Adrenal gland (tissue), 19 donors: ENCODE measurements at regions of chr10 and their contacts with region 1.

Region 1: DNA sequence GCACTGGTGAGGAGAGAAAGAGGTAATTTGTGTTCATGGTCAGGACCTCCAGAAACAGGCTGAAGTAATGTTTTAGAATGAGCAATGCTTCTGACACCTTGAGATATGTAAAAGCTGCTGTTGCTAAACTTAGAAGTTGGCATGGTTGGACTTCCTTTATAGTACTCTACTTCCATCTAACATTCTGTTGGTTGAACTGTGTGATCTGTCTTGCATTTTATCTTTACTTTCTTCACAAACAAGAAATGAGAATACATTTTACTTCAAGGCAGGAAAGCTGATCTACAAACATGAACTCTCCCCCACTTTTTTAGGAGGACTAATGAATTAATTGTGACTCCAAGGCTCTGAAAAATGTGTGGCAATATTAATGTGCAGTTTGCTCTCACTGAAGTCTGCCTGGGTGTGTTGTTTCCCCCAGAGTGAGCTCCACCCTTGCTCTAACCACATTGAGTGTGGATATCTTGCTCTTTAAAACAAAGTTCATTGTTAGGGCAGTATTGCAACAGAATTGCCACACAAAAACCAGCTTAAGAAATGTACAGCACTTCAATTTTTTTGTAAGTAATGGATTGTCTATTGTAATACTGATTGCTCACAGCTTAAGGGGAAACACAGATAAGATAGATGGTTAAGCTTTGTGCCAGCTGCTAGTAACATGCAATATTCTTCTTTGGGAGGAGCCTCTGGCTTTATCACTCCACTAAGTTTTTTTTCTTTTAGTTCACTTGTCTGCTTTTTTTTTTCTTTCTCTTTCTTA is 69.0 kb downstream of the ADD3 start:
- DNase-seq: peak in 6 of 7 donors; percentile 24 to 77 (median 56)
- H3K4me3 ChIP-seq: peak overlapping the region in 1 of 4 donors; percentile 21
- H3K27ac ChIP-seq: peak overlapping the region in 4 of 5 donors; percentile 18 to 76 (median 51)
- H3K4me1 ChIP-seq: peaks cover 18 to 50% of the 10 kb centered on the region in 2 donors
- H3K27me3 ChIP-seq: no peaks in the 10 kb centered on the region
- CTCF ChIP-seq: no peak
- POLR2A ChIP-seq: no peak

Region 2: DNA sequence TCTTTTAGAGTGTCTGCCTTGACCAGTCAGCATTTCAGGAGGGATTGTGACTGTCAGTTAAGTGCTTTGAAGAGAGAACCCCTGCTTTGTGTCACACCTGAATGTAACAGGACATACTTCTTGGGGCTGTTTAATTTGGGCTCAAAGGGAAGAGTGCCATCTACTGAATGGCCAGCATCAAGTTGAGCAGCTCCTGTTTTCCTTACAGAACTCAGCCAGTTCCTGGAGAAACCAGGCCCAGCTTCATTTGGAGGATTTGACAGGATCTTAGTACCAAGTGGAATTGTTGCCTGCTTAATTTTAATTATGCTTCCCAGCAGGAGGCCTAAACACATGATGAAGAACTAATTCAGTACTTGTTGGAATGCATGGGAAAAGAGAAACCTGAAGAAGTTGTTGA is 60.7 kb before region 1 on chr10:
- intact Hi-C with region 1: loop called in 1 of 2 experiments (anchors 10 kb)
- DNase-seq: peak in 1 of 7 donors; percentile 10
- H3K4me3 ChIP-seq: no peak overlapping the region
- H3K27ac ChIP-seq: no peak overlapping the region
- H3K4me1 ChIP-seq: peaks cover 0 to 21% of the 10 kb centered on the region in 2 donors
- H3K27me3 ChIP-seq: no peaks in the 10 kb centered on the region
- CTCF ChIP-seq: peak in 2 of 6 experiments; percentile 14 to 20
- POLR2A ChIP-seq: no peak